Psoas muscle (tissue), 8 donors: ENCODE measurements at regions of chr20 and their contacts with region 1.

Region 1: GRCh38 chr20:20138301-20139064 is 86.2 kb downstream of the CFAP61 start:
- DNase-seq: peak; percentile 24 to 76
- ATAC-seq: peak; percentile 60 to 89 (median 84)
- H3K4me3 ChIP-seq: peak overlapping the region; percentile 24
- H3K27ac ChIP-seq: peak overlapping the region; percentile 80
- H3K4me1 ChIP-seq: peaks cover 26% of the 10 kb centered on the region
- H3K27me3 ChIP-seq: no peaks in the 10 kb centered on the region
- CTCF ChIP-seq: no peak

Region 2: GRCh38 chr20:20037960-20038359 is 100.5 kb before region 1 on chr20:
- intact Hi-C with region 1: no loop called
- DNase-seq: no peak
- ATAC-seq: no peak
- H3K4me3 ChIP-seq: no peak overlapping the region
- H3K27ac ChIP-seq: no peak overlapping the region
- H3K4me1 ChIP-seq: no peaks in the 10 kb centered on the region
- H3K27me3 ChIP-seq: no peaks in the 10 kb centered on the region
- CTCF ChIP-seq: no peak

Region 3: DNA sequence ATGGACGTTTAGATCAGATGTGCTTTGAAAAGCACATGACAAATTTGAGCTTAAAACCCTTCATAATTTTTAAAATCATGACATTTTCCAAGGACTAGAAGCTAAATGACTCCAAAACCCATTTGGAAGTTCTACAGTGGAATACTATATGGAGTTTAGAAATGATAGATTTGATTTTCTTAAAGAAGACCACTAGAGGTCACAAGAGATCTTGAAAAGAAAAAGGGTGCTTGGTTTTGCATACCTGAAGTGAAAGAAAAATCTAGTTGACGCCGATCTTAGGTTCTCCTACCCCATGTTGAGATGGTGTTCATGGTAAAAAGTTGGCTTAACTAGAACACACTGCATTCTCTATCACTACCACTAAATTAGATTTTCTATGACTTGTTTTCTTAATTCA is 54.7 kb before region 1 on chr20:
- intact Hi-C with region 1: loop called in 1 of 2 experiments (anchors 5 kb)
- DNase-seq: no peak
- ATAC-seq: peak; percentile 18 to 43 (median 22)
- H3K4me3 ChIP-seq: peak overlapping the region; percentile 60
- H3K27ac ChIP-seq: peak overlapping the region; percentile 94
- H3K4me1 ChIP-seq: peaks cover 16% of the 10 kb centered on the region
- H3K27me3 ChIP-seq: no peaks in the 10 kb centered on the region
- CTCF ChIP-seq: peak; percentile 65

Region 4: DNA sequence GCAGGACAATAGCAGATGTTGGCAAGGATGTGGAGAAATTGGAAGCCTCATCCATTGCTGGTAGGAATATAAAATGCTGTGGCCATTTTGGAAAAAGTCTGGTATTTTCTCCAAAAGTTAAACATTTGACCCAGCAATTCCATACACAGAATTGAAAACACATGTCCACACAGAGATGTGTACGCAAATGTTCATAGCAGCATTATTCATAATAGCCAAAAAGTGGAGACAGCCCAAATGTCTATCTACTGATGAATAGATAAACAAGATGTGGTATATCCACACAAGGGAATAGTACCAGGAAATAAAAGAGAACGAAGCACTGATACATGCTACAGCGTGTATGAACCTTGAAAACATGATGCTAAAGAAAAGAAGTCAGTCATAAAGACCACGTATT is 45.7 kb before region 1 on chr20:
- intact Hi-C with region 1: loop called (anchors 5 kb)
- DNase-seq: no peak
- ATAC-seq: no peak
- H3K4me3 ChIP-seq: no peak overlapping the region
- H3K27ac ChIP-seq: no peak overlapping the region
- H3K4me1 ChIP-seq: peaks cover 25% of the 10 kb centered on the region
- H3K27me3 ChIP-seq: no peaks in the 10 kb centered on the region
- CTCF ChIP-seq: no peak